Lower leg skin (tissue), 4 donors: ENCODE measurements at regions of chr9 and their contacts with region 1.

Region 1: DNA sequence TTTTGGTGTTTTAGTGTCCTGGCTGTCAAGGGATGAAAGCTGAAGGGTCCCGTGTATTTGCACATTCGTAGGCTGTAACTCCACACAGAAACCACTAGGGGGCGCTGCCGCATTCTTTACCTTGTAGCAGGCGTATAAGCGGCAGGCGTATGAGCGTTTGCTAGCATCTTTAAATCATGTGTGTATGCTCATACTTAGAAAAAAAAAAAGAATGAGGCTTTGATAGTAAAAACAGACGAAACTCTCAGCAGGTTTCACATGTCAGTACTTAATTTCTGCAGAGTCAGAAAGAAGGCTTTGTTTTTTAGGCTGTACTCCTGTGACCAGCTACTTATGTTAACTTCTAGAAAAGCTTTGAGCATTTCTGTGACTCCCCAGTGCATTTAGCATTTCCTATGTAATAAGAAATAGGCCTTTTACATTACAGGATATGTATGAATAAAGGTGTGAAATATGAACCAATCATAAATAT is 218.8 kb upstream of the ADAMTSL1 start:
- DNase-seq: peak; percentile 59 to 96
- H3K4me3 ChIP-seq: no peak overlapping the region
- CTCF ChIP-seq: peak in 1 of 3 donors; percentile 54
- POLR2A ChIP-seq: no peak

Region 2: DNA sequence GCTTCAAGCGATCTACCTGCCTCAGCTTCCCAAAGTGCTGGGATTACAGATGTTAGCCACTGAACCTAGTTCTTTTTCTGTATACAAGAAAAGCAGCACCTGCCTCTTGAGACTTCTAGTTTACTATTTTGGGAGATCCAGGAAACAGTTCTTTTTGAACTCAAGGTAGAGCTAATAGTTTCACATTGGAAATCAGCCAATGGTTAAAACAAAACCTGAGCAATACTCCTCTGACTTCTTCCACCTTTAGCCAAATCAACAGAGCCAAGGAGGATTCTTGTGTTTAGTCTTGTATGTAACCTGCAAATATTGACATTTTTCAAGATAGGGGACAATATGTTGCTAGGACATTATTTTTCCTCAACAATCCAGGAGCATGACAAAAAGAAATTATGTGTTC is 327.0 kb before region 1 on chr9:
- intact Hi-C with region 1: no loop called
- DNase-seq: no peak
- H3K4me3 ChIP-seq: no peak overlapping the region
- CTCF ChIP-seq: no peak
- POLR2A ChIP-seq: no peak

Region 3: DNA sequence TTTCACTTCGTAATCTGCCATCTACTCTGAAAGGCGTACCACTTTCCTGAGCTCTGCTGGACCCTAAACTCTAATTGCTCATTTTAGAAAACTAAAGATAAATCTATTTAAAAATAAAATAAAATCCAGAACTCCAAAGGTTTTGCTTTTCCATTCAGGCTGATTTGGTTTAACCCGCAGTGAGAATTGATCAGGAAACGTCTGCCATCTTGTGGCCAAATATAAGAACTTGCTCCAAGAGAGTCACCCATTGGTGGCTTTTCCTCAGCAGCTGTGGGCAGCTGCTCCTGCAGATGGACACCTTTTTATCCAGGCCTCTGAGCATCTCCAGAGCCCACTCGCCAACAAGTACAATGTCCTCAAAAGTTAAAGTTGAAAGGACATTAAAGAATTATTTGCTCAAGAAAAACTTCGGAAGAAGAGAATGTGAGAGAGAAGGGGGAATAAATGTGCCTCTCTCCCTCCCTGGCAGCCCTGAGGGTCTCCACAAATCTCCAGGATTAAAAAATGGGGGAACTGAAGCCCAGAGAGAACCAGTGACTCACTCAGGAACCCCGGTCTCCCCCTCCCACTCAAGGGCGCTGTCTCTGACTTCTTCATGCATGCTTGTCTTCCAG is 773.7 kb after region 1 on chr9:
- intact Hi-C with region 1: loop called (anchors 5 kb)
- DNase-seq: peak in 1 of 2 donors; percentile 44
- H3K4me3 ChIP-seq: no peak overlapping the region
- CTCF ChIP-seq: peak in 1 of 3 donors; percentile 9
- POLR2A ChIP-seq: no peak